Colonic mucosa (tissue), 4 donors: ENCODE measurements at regions of chrX and their contacts with region 1.

Region 1: DNA sequence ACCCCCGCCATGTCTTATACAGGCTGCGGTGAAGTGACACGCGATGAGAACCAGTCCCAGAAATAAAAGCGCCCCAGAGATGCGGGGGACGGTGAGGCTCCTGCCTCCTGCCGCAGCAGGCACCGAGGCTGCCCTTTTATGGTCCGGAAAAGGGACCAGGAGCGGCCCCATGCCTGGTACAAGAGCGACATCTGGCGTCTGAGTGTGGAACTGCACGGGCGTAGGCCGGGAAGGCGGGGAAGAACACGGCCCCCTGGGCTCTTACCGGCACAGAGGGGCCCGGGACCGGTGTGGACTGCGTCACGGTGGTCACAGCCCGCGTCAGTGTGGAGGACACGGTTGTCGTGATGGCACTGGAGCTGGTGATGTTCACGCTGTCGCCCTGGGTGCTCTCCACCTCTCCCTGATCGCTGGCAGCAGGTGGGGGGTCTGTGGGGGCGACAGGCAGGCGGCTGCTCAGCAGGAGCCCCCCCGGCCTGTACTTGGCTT is 8.9 kb upstream of the RENBP start:
- DNase-seq: peak; percentile 70
- H3K4me3 ChIP-seq: no peak overlapping the region
- H3K27ac ChIP-seq: no peak overlapping the region
- H3K4me1 ChIP-seq: no peaks in the 10 kb centered on the region
- H3K27me3 ChIP-seq: no peaks in the 10 kb centered on the region
- CTCF ChIP-seq: peak; percentile 100

Region 2: GRCh38 chrX:153554519-153555167 is 398.7 kb before region 1 on chrX:
- intact Hi-C with region 1: loop called (anchors 10 kb)
- DNase-seq: peak; percentile 74
- H3K4me3 ChIP-seq: no peak overlapping the region
- H3K27ac ChIP-seq: no peak overlapping the region
- H3K4me1 ChIP-seq: no peaks in the 10 kb centered on the region
- H3K27me3 ChIP-seq: no peaks in the 10 kb centered on the region
- CTCF ChIP-seq: peak; percentile 63

Region 3: DNA sequence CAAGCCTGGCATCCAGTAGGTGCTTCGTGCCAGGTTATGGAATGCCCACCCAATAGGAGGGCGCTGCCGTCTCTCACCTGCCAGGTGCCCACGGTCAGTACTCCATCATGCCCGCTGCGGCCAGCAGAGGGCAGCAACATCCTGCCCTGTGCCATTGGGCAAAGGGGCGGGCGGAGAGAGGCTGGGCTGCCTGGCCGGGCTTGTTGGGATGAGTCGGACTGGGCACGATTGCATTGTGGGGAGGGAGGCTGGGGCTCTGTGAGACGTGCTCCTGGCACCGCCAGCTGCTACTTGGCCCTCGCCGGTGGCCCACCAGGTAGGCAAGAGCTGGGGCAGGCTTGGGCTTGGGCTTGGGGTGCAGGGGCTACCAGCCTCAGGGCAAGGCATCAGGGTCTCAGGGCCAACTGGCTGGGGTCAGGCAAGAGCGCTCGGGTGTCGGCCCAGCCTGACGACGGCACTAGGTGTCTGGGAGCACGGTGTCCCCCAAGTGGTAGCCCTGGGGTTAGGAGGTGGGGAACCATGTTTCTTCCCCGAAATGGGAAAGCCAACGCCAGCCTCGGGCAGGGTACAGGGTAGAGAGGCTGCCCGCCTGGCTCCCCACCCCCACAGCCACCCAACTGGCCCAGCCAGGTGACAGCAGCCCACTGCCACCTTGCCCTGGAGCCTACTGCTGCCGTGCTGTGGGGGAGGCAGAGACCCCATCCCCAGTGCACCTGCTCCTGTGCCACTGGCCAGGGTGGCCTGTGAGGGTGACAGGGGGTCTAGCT is 189.2 kb before region 1 on chrX and contains the start of gene PLXNB3:
- intact Hi-C with region 1: loop called (anchors 5 kb)
- DNase-seq: peak; percentile 87
- H3K4me3 ChIP-seq: no peak within 1 kb of the TSS
- H3K27ac ChIP-seq: no peak within 1 kb of the TSS
- H3K4me1 ChIP-seq: no peaks in the 10 kb centered on the region
- H3K27me3 ChIP-seq: no peaks in the 10 kb centered on the region
- CTCF ChIP-seq: peak; percentile 92
- total RNA-seq, gene PLXNB3: 0.57 to 3.7 TPM

Region 4: DNA sequence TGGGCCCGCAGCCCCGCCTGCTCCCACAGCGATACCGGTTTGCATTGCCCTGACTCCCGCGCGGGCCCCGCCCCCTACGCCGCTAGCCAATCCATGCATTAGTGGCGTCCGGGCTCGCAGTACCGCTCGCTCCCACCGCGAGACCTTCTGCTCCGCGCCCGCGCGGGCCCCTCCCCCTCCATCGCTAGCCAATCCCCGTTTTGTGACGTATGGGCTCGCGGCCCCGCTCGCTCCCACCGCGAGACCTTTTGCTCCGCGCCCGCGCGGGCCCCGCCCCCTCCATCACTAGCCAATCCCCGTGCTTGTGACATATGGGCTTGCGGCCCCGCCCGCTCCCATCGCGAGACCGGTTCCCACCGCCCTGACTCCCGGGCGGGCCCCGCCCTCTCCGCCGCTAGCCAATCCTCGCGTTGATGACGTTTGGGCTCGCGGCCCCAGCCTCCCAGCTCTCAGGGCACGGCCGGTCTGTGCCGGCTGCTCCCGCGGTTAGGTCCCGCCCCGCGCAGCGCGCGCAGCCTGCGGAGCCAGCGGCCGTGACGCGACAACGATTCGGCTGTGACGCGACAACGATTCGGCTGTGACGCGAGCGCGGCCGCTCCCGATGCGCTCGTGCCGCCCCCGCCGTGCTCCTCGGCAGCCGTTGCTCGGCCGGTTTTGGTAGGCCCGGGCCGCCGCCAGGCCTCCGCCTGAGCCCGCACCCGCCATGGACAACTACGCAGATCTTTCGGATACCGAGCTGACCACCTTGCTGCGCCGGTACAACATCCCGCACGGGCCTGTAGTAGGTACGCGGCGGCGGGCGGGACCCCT is 425.6 kb after region 1 on chrX and contains the start of gene EMD:
- intact Hi-C with region 1: no loop called
- DNase-seq: peak; percentile 95
- H3K4me3 ChIP-seq: peak within 1 kb of the TSS; percentile 63
- H3K27ac ChIP-seq: peak within 1 kb of the TSS; percentile 95
- H3K4me1 ChIP-seq: no peaks in the 10 kb centered on the region
- H3K27me3 ChIP-seq: no peaks in the 10 kb centered on the region
- CTCF ChIP-seq: no peak
- total RNA-seq, gene EMD: 44.4 to 49.1 TPM